IMR-90 (cell line): ENCODE measurements at regions of chr21 and their contacts with region 1.

Region 1: GRCh38 chr21:33339918-33340317 is 15.1 kb downstream of the IFNAR1 start:
- DNase-seq: peak; percentile 12
- ATAC-seq: no peak
- H3K4me3 ChIP-seq: no peak overlapping the region
- H3K27ac ChIP-seq: no peak overlapping the region
- H3K4me1 ChIP-seq: peaks cover 6% of the 10 kb centered on the region
- H3K27me3 ChIP-seq: no peaks in the 10 kb centered on the region
- CTCF ChIP-seq: no peak
- POLR2A ChIP-seq: no peak
- RAD21 ChIP-seq: no peak

Region 2: DNA sequence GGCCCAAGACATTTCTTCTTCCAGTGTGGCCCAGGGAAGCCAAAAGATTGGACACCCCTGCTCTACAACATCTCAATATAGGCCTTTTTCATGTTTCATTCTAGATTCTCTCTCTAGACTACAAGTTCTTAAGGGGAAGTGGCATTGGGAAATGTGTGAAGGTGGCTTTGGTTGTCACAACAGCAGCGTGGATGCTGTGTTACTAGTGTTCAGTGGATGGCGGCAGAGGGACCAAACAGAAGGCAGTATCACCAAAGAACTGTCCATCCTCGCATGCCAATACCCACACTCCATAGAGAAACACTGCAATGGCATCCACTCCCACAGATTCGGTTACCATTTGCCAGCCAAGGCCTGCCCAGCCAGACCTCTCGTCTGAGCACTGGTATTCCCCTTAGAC is 134.4 kb before region 1 on chr21:
- CTCF ChIA-PET with region 1: no interaction called
- POLR2A ChIA-PET with region 1: no interaction called
- dilution Hi-C with region 1: no loop called
- in situ Hi-C with region 1: no loop called
- intact Hi-C with region 1: no loop called
- DNase-seq: no peak
- ATAC-seq: no peak
- H3K4me3 ChIP-seq: no peak overlapping the region
- H3K27ac ChIP-seq: no peak overlapping the region
- H3K4me1 ChIP-seq: peaks cover 10% of the 10 kb centered on the region
- H3K27me3 ChIP-seq: no peaks in the 10 kb centered on the region
- CTCF ChIP-seq: no peak
- POLR2A ChIP-seq: no peak
- RAD21 ChIP-seq: no peak

Region 3: GRCh38 chr21:33305938-33306337 is 34.0 kb before region 1 on chr21:
- CTCF ChIA-PET with region 1: no interaction called
- POLR2A ChIA-PET with region 1: no interaction called
- dilution Hi-C with region 1: no loop called
- in situ Hi-C with region 1: no loop called
- intact Hi-C with region 1: loop called (anchors 1 kb)
- DNase-seq: no peak
- ATAC-seq: no peak
- H3K4me3 ChIP-seq: no peak overlapping the region
- H3K27ac ChIP-seq: no peak overlapping the region
- H3K4me1 ChIP-seq: peaks cover 4% of the 10 kb centered on the region
- H3K27me3 ChIP-seq: 0 out of 2 replicates have a peak, but pooled peaks cover 4% of the 10 kb centered on the region
- CTCF ChIP-seq: no peak
- POLR2A ChIP-seq: no peak
- RAD21 ChIP-seq: no peak

Region 4: DNA sequence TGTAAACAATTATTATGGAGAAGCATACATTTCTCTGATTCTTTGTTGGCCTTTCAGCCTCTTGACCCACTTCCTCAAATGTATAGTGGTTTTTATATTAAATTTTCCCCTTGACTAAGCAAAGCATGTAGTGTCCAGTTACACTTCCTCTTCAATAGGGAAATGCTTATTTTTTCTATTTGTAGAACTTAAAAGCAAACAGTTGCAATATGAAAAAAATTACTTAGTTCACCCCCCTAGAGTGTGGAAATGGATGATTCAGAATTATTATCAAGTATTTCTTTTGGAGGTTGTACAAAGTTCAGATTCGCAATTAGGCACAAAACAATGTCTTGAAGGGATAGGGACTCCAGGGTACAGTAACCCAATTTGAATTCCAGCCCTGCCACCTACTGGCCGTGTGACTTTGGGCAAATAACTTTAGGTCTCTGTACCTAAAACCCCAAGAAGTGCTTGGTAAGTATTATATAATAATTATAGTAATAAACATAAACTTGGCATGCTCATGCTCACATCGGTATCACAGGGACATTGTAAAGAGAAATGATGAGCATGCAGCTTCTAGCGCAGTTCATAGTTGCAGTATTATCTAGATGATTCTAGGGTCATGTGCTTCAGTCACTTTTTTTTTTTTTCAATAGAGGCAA is 34.7 kb after region 1 on chr21:
- CTCF ChIA-PET with region 1: no interaction called
- POLR2A ChIA-PET with region 1: no interaction called
- dilution Hi-C with region 1: no loop called
- in situ Hi-C with region 1: no loop called
- intact Hi-C with region 1: loop called (anchors 5 kb)
- DNase-seq: peak; percentile 58
- ATAC-seq: peak; percentile 82
- H3K4me3 ChIP-seq: no peak overlapping the region
- H3K27ac ChIP-seq: no peak overlapping the region
- H3K4me1 ChIP-seq: peaks cover 6% of the 10 kb centered on the region; the same call in 1 of the 2 replicates
- H3K27me3 ChIP-seq: no peaks in the 10 kb centered on the region; the same call in 1 of the 2 replicates
- CTCF ChIP-seq: peak; percentile 57
- POLR2A ChIP-seq: no peak
- RAD21 ChIP-seq: peak; percentile 64

Region 5: GRCh38 chr21:33394260-33394659 is 54.3 kb after region 1 on chr21:
- CTCF ChIA-PET with region 1: no interaction called
- POLR2A ChIA-PET with region 1: no interaction called
- dilution Hi-C with region 1: no loop called
- in situ Hi-C with region 1: no loop called
- intact Hi-C with region 1: no loop called
- DNase-seq: no peak
- ATAC-seq: no peak
- H3K4me3 ChIP-seq: no peak overlapping the region
- H3K27ac ChIP-seq: no peak overlapping the region
- H3K4me1 ChIP-seq: peaks cover 8% of the 10 kb centered on the region
- H3K27me3 ChIP-seq: peaks cover 6% of the 10 kb centered on the region
- CTCF ChIP-seq: no peak
- POLR2A ChIP-seq: no peak
- RAD21 ChIP-seq: no peak

Region 6: GRCh38 chr21:33434770-33435360 is 94.9 kb after region 1 on chr21:
- CTCF ChIA-PET with region 1: no interaction called
- POLR2A ChIA-PET with region 1: no interaction called
- dilution Hi-C with region 1: no loop called
- in situ Hi-C with region 1: no loop called
- intact Hi-C with region 1: no loop called
- DNase-seq: peak; percentile 96
- ATAC-seq: peak; percentile 95
- H3K4me3 ChIP-seq: no peak overlapping the region
- H3K27ac ChIP-seq: peak overlapping the region; percentile 74; the same call in 1 of the 2 replicates
- H3K4me1 ChIP-seq: peaks cover 10% of the 10 kb centered on the region
- H3K27me3 ChIP-seq: no peaks in the 10 kb centered on the region
- CTCF ChIP-seq: no peak
- POLR2A ChIP-seq: peak; percentile 43; the same call in 1 of the 2 replicates
- RAD21 ChIP-seq: no peak